ENCODE measurements at regions of chr20 and their contacts with region 1.

Region 1: DNA sequence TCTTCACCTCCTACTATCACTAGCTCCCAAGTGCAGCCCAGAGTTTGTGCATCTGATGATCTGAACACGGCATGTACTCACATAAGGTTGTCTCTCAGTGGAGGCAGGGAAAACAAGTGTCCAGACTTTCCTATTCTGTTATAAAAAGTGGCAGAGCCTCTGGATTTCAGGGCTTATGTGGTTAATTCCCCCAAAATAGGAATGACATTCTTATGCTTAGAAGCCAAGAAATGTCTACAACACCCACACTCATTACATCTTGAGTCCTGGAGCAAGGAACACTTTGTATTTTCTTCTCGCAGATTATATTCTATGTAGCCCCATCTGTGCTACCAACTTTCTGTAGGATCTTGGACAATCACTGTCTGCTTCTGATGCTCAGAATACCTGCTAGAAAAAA is 13.5 kb upstream of the SEMG1 start:
- DNase-seq: peak in 1 of 10 donors; percentile 24
- H3K4me3 ChIP-seq: no peak overlapping the region
- H3K27ac ChIP-seq: peak overlapping the region in 47 of 59 donors; percentile 0 to 95 (median 74)
- H3K27me3 ChIP-seq: peaks cover 0 to 4% (median 0%) of the 10 kb centered on the region in 45 donors
- CTCF ChIP-seq: no peak

Region 2: DNA sequence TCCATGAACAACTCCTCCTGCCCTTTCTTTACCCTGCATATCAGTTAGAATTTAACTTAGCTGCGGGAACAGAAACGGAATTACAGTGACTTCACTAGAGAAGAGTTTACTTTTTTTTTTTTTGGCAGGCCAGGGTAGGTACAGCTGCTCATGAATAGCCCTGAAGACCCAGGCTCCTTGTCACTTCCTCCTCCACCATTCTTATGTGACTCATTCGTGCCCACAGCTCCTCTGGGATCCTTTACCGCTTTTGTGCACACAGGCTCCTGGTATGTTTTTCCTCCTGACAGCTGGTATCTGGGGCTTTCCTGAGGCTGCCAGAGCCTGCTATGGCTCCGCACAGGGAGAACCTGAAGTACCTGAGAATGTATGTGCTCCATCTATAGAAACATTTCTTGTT is 88.5 kb before region 1 on chr20:
- intact Hi-C with region 1: loop called in 1 of 2 experiments (anchors 2 kb)
- DNase-seq: peak in 4 of 10 donors; percentile 23 to 60 (median 58)
- H3K4me3 ChIP-seq: no peak overlapping the region
- H3K27ac ChIP-seq: peak overlapping the region in 35 of 59 donors; percentile 21 to 85 (median 67)
- H3K27me3 ChIP-seq: peaks cover 0 to 10% (median 0%) of the 10 kb centered on the region in 45 donors
- CTCF ChIP-seq: no peak